MCF 10A (cell line): ENCODE measurements at regions of chr7 and their contacts with region 1.

Region 1: DNA sequence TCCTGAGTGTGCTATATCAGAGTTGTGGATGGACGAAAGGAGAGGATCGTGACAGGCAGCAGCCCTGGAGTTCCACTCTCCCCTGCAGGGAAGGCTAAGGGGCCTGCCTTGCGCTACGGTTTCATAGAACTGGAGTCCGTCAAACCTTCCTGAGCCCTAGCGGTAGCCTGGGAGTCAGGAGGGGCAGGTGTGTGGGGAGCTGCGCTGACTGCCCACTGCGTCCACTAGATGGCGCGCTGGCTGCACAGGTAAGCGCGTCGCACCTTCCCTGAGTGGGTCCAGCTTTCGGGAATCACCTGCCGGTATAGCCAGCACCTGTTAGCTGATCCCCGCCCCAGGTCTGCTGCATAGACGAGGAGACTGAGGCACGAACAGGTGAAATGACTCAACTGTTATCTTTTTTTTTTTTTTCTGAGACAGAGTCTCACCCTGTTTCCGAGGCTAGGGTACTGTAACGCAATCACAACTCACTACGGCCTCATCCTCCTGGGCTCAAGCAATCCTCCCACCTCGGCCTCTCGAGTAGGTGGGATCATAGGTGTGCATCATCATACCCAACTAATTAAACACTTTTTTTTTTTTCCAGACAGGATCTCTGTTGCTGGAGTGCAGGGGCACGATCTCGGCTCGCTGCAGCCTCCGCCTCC is 20.2 kb upstream of the BAIAP2L1 start:
- DNase-seq: peak; percentile 87
- H3K4me3 Mint-ChIP-seq: no peak overlapping the region
- H3K27ac Mint-ChIP-seq: no peak overlapping the region
- H3K4me1 Mint-ChIP-seq: peaks cover 16% of the 10 kb centered on the region
- H3K27me3 Mint-ChIP-seq: no peaks in the 10 kb centered on the region
- CTCF ChIP-seq: peak; percentile 98

Region 2: GRCh38 chr7:98294796-98295382 is 126.2 kb before region 1 on chr7:
- CTCF ChIA-PET with region 1: interaction called, 10 read pairs
- POLR2A ChIA-PET with region 1: no interaction called
- intact Hi-C with region 1: no loop called
- DNase-seq: peak; percentile 72
- H3K4me3 Mint-ChIP-seq: no peak overlapping the region
- H3K27ac Mint-ChIP-seq: peak overlapping the region; percentile 79
- H3K4me1 Mint-ChIP-seq: no peaks in the 10 kb centered on the region
- H3K27me3 Mint-ChIP-seq: no peaks in the 10 kb centered on the region
- CTCF ChIP-seq: peak; percentile 84

Region 3: DNA sequence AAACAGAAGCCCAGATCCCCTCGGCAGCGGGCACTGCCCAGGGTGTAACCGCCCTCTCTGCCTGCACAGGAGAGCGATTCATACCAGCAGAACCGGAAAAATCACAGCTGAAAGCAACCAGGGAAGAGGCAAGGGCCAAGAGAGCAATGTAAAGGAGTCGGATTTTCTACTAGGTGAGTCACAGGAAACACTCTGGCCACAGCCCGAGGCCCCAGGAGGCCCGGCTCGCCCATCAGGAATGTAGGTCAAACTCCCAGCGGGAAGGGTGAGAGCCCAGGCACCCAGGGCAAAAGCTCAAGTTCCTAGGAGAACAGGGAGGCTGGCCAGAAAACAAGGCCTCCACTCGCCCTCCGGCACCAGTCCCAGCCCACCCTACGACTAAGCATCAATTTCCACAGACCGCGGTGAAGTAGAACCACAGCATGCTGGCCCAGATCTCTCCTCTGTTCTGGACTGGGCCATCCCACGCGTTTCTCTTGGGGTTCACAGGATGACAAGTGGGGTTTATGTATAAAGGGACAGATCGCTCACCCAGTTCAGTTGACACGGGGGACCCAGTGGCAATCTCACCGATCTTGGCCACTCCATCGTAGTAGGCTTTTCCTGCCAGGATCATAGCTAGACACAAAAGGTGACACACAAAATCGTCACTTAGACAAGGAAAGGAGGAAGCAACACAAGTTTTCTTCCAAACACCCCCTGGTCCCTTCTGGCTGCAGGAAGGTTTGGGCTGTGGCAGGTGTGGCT is 66.4 kb before region 1 on chr7:
- CTCF ChIA-PET with region 1: interaction called, 4 read pairs
- POLR2A ChIA-PET with region 1: no interaction called
- intact Hi-C with region 1: loop called (anchors 5 kb)
- DNase-seq: peak; percentile 96
- H3K4me3 Mint-ChIP-seq: peak overlapping the region; percentile 57
- H3K27ac Mint-ChIP-seq: peak overlapping the region; percentile 94
- H3K4me1 Mint-ChIP-seq: peaks cover 40% of the 10 kb centered on the region
- H3K27me3 Mint-ChIP-seq: no peaks in the 10 kb centered on the region
- CTCF ChIP-seq: no peak

Region 4: GRCh38 chr7:98409843-98410242 is 11.2 kb before region 1 on chr7:
- CTCF ChIA-PET with region 1: interaction called, 11 read pairs
- POLR2A ChIA-PET with region 1: no interaction called
- intact Hi-C with region 1: no loop called
- DNase-seq: no peak
- H3K4me3 Mint-ChIP-seq: no peak overlapping the region
- H3K27ac Mint-ChIP-seq: no peak overlapping the region
- H3K4me1 Mint-ChIP-seq: no peaks in the 10 kb centered on the region
- H3K27me3 Mint-ChIP-seq: no peaks in the 10 kb centered on the region
- CTCF ChIP-seq: no peak

Region 5: DNA sequence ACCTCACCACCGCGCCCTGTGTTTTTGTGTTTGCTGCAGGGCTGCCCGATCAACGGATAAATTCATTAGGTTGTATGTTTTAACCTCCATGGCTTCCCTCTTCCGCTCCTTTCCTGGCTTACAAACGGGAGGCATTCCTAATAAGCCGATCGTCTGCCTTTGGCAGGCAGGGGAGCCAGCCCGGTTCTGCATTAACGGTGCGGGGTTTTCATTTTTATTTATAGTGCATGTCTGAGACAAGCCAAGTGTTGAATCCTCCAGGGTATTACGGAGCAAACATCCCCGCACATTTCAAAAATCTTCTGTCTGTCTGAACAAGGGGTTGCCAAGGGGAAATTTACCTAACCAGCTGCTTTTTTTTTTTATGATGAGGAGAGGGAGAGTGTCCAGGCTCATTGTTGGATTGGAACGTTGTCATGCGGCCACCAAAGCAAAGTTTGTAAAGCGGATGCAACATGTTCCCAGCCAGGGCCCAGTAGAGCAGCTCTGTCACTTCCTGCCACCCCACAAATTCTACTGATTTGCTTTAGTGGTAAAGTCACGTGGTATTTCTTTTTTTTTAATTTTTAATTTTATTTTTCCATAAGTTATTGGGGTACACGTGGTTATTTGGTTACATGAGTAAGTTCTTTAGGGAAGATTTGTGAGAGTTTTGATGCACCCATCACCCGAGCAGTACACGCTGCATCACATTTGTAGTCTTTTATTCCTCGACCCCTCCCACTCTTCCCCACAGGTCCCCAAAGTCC is 72.1 kb after region 1 on chr7:
- CTCF ChIA-PET with region 1: no interaction called
- POLR2A ChIA-PET with region 1: no interaction called
- intact Hi-C with region 1: no loop called
- DNase-seq: no peak
- H3K4me3 Mint-ChIP-seq: no peak overlapping the region
- H3K27ac Mint-ChIP-seq: no peak overlapping the region
- H3K4me1 Mint-ChIP-seq: no peaks in the 10 kb centered on the region
- H3K27me3 Mint-ChIP-seq: no peaks in the 10 kb centered on the region
- CTCF ChIP-seq: no peak

Region 6: GRCh38 chr7:98506471-98506870 is 85.4 kb after region 1 on chr7:
- CTCF ChIA-PET with region 1: no interaction called
- POLR2A ChIA-PET with region 1: no interaction called
- intact Hi-C with region 1: no loop called
- DNase-seq: no peak
- H3K4me3 Mint-ChIP-seq: no peak overlapping the region
- H3K27ac Mint-ChIP-seq: no peak overlapping the region
- H3K4me1 Mint-ChIP-seq: no peaks in the 10 kb centered on the region
- H3K27me3 Mint-ChIP-seq: peaks cover 52% of the 10 kb centered on the region
- CTCF ChIP-seq: no peak

Region 7: DNA sequence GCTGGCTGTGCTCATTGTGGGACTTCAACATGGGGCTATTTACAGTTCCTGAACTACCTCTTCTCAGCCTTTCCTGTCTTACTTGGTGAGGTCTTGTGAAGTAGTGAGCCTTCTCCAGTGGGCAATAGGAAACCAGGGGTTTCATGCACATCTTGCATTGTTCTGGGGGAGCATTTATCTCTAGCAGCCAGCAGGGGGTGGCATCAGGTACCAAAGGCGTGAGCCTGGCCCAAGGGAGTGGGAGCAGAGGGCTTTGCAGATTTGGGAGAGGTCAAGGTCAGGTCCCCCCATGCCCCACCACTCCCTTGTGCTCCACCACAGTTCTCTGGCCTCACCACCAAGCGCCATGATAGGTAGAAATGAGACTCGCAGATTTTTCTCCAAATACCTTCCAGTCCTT is 110.6 kb after region 1 on chr7:
- CTCF ChIA-PET with region 1: no interaction called
- POLR2A ChIA-PET with region 1: no interaction called
- intact Hi-C with region 1: no loop called
- DNase-seq: no peak
- H3K4me3 Mint-ChIP-seq: no peak overlapping the region
- H3K27ac Mint-ChIP-seq: no peak overlapping the region
- H3K4me1 Mint-ChIP-seq: peaks cover 5% of the 10 kb centered on the region
- H3K27me3 Mint-ChIP-seq: no peaks in the 10 kb centered on the region
- CTCF ChIP-seq: no peak

Region 8: DNA sequence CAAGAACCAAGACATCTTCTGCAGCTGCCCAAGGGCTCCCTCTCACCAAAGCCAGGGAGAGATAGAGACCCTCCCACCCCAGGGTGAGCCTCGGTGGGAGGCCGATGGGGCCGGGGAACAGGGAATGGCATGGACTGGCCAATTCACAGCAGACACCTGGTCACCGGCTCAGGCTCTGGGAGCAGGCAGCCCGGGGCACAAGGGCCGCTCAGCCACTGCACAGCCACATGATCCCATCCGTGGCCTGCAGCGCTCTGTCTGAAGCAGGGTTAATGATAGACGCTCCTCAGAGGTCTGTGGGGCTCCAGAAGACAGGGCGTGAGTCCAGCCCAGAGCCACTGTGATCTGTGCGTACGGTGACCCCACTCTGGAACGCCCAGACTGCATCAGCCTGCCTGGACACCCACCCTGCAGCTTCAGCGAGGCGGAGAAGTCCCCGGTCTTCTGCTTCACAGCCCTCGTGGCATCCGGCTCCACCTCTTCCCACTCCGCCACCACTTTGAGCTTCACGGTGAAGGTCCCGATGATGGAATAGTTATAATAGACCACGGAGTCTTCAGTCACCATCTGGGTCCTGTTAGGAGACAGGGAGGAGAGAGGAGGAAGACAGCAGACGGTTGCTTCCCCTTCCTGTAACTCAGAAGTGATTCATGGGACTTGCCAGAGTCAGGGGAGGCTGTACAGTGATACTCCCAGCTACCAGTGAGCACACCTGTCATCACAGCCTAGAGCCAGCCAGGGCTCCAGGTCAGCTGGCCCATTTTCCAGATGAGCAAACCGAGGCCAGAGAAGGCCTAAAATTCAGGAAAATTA is 434.7 kb after region 1 on chr7:
- CTCF ChIA-PET with region 1: interaction called, 12 read pairs
- POLR2A ChIA-PET with region 1: no interaction called
- intact Hi-C with region 1: no loop called
- DNase-seq: no peak
- H3K4me3 Mint-ChIP-seq: no peak overlapping the region
- H3K27ac Mint-ChIP-seq: no peak overlapping the region
- H3K4me1 Mint-ChIP-seq: no peaks in the 10 kb centered on the region
- H3K27me3 Mint-ChIP-seq: peaks cover 51% of the 10 kb centered on the region
- CTCF ChIP-seq: no peak

Region 9: GRCh38 chr7:98887038-98887437 is 465.9 kb after region 1 on chr7:
- CTCF ChIA-PET with region 1: no interaction called
- POLR2A ChIA-PET with region 1: no interaction called
- intact Hi-C with region 1: no loop called
- DNase-seq: no peak
- H3K4me3 Mint-ChIP-seq: no peak overlapping the region
- H3K27ac Mint-ChIP-seq: no peak overlapping the region
- H3K4me1 Mint-ChIP-seq: no peaks in the 10 kb centered on the region
- H3K27me3 Mint-ChIP-seq: no peaks in the 10 kb centered on the region
- CTCF ChIP-seq: no peak